Activated CD8-positive, alpha-beta T cell treated with anti-CD3 and anti-CD28 coated beads for 36 hours (primary cell): ENCODE measurements at regions of chr3 and their contacts with region 1.

Region 1: GRCh38 chr3:71456156-71456555 is 127.4 kb downstream of the FOXP1 start:
- DNase-seq: peak; percentile 30
- ATAC-seq: no peak
- H3K4me3 Mint-ChIP-seq: peak overlapping the region; percentile 68
- H3K27ac Mint-ChIP-seq: peak overlapping the region; percentile 93
- H3K4me1 Mint-ChIP-seq: peaks cover 88% of the 10 kb centered on the region
- H3K27me3 Mint-ChIP-seq: no peaks in the 10 kb centered on the region
- CTCF ChIP-seq: peak; percentile 26

Region 2: DNA sequence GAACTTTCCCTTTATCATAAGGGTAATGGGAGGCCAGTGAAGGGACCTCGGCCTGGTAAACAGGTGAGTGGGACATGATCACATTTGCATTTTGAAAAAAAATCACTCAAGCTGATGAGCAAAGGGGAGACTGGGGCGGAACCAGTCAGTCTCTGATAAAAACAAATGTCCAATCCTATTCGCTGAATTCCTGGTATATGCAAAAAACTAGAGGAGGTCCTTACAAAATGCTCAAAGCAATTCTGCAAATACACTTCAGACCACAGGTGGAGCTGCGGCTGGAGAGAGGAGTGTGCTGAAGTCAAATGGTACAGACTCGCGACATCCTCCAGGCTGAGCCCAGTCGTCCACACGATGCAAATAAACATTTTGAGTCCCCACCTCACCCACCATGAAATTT is 39.3 kb before region 1 on chr3:
- CTCF ChIA-PET with region 1: interaction called, 11 read pairs
- POLR2A ChIA-PET with region 1: interaction called, 7 read pairs
- intact Hi-C with region 1: loop called (anchors 5 kb)
- DNase-seq: peak; percentile 84
- ATAC-seq: peak; percentile 55
- H3K4me3 Mint-ChIP-seq: peak overlapping the region; percentile 60
- H3K27ac Mint-ChIP-seq: peak overlapping the region; percentile 82
- H3K4me1 Mint-ChIP-seq: peaks cover 96% of the 10 kb centered on the region
- H3K27me3 Mint-ChIP-seq: no peaks in the 10 kb centered on the region
- CTCF ChIP-seq: peak; percentile 40

Region 3: DNA sequence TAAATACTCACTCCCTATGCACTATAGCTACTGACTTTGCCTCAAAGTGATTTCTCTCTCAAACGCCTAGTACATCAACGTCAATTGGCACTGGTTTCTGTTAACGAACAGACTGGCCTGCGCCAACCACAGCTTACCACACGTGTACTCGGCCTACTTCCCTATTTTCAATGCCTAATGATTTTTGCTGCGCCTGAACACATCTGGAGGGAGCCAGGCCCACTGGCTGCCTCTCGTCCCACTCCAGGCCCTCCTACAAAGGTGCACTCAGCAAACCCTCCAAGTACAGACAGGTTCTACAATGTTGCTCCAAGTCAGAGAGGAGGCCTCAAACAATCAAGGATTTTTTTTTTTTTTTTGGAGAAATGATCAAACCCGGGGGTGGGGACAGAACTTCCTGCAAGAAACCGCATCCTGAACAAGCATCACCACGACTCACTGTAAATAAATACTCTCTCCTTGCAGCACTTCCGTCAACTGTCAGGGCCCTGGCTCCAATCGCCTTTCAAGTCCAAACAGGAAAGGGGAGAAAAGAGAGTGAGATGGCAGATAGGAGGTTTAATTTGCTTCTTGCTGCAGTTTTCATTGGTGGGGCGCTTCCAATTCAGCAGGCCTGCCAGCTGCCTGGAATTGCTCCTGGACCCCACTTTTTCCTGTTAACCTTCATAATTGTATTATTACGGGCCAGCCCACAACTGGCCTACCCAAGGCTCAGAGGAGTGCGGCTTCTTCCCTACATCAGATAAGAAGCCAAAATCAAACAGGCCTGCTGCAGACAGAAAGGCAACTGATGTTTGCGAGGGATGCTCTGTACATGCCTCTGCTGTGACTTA is 11.9 kb before region 1 on chr3:
- CTCF ChIA-PET with region 1: interaction called, 10 read pairs
- POLR2A ChIA-PET with region 1: interaction called, 16 read pairs
- intact Hi-C with region 1: no loop called
- DNase-seq: peak; percentile 82
- ATAC-seq: peak; percentile 63
- H3K4me3 Mint-ChIP-seq: peak overlapping the region; percentile 73
- H3K27ac Mint-ChIP-seq: peak overlapping the region; percentile 100
- H3K4me1 Mint-ChIP-seq: peaks cover 89% of the 10 kb centered on the region
- H3K27me3 Mint-ChIP-seq: no peaks in the 10 kb centered on the region
- CTCF ChIP-seq: no peak

Region 4: DNA sequence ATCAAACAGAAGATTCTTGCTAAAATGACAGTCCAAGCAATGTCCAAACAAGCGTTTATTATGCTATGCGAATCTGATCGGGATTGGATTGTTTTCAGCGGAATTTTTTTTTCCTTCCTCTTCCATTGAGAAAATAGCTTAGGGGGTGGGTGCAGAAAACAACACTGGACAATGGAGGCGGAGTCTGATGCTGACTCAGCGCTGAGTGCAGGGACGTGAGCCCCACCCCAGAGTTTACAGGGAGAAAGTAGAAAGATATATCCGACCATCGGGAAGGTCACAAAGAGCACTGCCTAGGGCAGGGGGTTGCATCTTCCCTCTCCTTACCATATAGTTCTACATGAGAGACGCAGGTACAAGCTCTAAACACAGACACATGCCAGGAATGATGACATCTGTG is 10.3 kb after region 1 on chr3:
- CTCF ChIA-PET with region 1: interaction called, 3 read pairs
- POLR2A ChIA-PET with region 1: interaction called, 10 read pairs
- intact Hi-C with region 1: no loop called
- DNase-seq: no peak
- ATAC-seq: no peak
- H3K4me3 Mint-ChIP-seq: no peak overlapping the region
- H3K27ac Mint-ChIP-seq: no peak overlapping the region
- H3K4me1 Mint-ChIP-seq: peaks cover 72% of the 10 kb centered on the region
- H3K27me3 Mint-ChIP-seq: no peaks in the 10 kb centered on the region
- CTCF ChIP-seq: no peak

Region 5: GRCh38 chr3:71487418-71487817 is 31.3 kb after region 1 on chr3:
- CTCF ChIA-PET with region 1: interaction called, 6 read pairs
- POLR2A ChIA-PET with region 1: interaction called, 6 read pairs
- intact Hi-C with region 1: loop called (anchors 5 kb)
- DNase-seq: no peak
- ATAC-seq: peak; percentile 29
- H3K4me3 Mint-ChIP-seq: peak overlapping the region; percentile 72
- H3K27ac Mint-ChIP-seq: peak overlapping the region; percentile 98
- H3K4me1 Mint-ChIP-seq: peaks cover 83% of the 10 kb centered on the region
- H3K27me3 Mint-ChIP-seq: no peaks in the 10 kb centered on the region
- CTCF ChIP-seq: no peak

Region 6: DNA sequence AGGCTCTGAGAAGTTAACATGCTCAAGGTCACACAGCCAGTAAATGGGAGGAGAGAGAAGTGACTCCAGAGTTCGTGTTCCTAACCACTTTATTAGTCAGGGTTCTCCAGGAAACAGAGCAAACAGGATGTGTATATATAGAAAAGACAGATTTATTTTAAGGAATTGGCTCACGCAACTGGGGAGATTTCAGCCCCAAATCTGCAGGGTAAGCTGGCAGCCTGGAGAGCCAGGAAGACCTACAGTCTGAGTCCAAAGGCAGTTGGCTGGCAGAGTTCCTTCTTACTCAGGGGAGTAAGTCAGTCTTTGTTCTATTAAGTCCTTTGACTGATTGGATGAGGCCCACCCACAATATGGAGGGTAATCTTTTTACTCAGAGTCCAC is 446.9 kb after region 1 on chr3:
- CTCF ChIA-PET with region 1: no interaction called
- POLR2A ChIA-PET with region 1: no interaction called
- intact Hi-C with region 1: no loop called
- DNase-seq: no peak
- ATAC-seq: no peak
- H3K4me3 Mint-ChIP-seq: no peak overlapping the region
- H3K27ac Mint-ChIP-seq: no peak overlapping the region
- H3K4me1 Mint-ChIP-seq: peaks cover 4% of the 10 kb centered on the region
- H3K27me3 Mint-ChIP-seq: peaks cover 5% of the 10 kb centered on the region
- CTCF ChIP-seq: no peak